ENCODE measurements at regions of chr7 and their contacts with region 1.

Region 1: GRCh38 chr7:17298207-17298839 is at the start of gene AHR:
- DNase-seq: peak; percentile 89 to 93
- ATAC-seq: peak; percentile 80 to 94 (median 92)
- H3K4me3 ChIP-seq: peak within 1 kb of the TSS; percentile 81
- H3K27ac ChIP-seq: peak within 1 kb of the TSS; percentile 78
- H3K4me1 ChIP-seq: no peaks in the 10 kb centered on the region
- H3K27me3 ChIP-seq: peaks cover 0 to 22% (median 7%) of the 10 kb centered on the region in 3 donors
- CTCF ChIP-seq: no peak
- total RNA-seq, gene AHR: 3.8 to 9.2 (median 6.9) TPM

Region 2: DNA sequence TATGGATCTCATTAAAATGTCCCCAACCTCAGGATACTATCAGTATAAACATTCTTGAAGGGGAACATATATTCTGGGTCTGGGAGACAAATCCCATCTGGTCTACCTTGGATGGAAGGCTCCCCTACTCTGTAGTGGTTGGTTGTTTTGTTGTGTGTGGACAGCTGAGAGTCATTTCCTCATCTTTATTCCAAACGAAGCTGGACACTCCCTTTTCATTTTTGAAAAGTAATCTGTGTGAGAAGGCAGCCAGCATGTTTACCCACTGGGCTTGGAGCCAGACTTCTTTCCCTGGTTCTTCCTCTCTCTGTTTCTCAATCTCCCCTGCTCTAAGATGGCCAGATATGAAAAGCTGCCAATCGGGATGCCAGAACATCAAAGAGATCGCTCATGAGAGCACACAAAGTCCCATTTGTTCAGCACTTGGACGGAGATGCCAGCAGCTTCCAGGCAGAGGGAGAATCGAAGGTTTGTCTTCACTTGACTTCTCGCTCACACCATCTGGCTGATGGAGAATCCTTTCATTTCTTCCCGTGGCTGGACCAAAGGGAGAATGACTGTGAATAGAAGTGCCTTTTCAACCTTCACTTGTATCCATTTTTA is 308.4 kb before region 1 on chr7:
- intact Hi-C with region 1: loop called in 1 of 2 experiments (anchors 5 kb)
- DNase-seq: peak; percentile 43 to 57
- ATAC-seq: peak in 3 of 4 donors; percentile 42 to 54 (median 44)
- H3K4me3 ChIP-seq: no peak overlapping the region
- H3K27ac ChIP-seq: no peak overlapping the region
- H3K4me1 ChIP-seq: no peaks in the 10 kb centered on the region
- H3K27me3 ChIP-seq: no peaks in the 10 kb centered on the region
- CTCF ChIP-seq: no peak